ENCODE measurements at regions of chr6 and their contacts with region 1.

Region 1: GRCh38 chr6:136798031-136798430 is 5.8 kb upstream of the MAP3K5 start:
- DNase-seq: no peak
- ATAC-seq: no peak
- H3K4me3 ChIP-seq: no peak overlapping the region
- H3K4me3 Mint-ChIP-seq: no peak overlapping the region
- H3K27ac ChIP-seq: no peak overlapping the region
- H3K27ac Mint-ChIP-seq: no peak overlapping the region
- H3K4me1 ChIP-seq: peaks cover 6 to 8% of the 10 kb centered on the region in 2 experiments
- H3K4me1 Mint-ChIP-seq: peaks cover 5 to 6% (median 6%) of the 10 kb centered on the region in 3 donors
- H3K27me3 ChIP-seq: no peaks in the 10 kb centered on the region
- H3K27me3 Mint-ChIP-seq: peaks cover 0 to 5% of the 10 kb centered on the region in 2 donors

Region 2: DNA sequence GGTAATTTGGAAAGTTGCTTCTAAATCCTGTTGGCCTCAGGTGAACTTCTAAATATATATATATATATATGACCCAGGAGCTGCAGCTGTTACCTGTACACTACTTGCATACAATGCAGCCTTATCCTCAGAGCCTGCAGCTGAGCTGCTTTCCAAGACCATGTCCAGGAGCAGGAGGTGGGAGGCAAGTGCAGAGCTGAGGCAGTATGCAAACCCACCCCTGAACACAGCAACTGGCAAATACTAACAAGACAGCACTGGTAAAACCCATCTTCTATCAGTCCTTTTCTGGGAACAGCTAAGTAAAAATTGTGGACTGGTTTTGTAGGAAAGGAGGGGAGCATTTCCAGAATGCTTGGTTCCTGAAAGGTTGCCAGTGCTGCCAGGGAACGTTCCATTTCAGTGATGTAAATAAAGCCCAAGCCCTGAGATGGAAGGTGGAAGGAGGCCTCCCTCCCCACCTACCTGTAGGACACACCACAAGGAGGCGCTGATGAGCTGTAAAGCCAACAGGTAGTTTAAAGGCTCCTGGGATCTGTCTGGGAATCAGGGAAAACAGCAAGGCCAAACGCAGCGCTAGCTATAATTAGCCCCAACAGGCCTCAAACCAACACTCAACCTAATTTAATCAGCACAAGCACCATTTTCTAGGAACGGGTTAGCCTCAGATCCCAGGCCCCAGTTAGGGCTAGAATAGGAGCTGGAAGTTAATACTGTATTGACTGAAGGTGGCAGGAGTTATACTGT is 154.0 kb before region 1 on chr6:
- CTCF ChIA-PET with region 1: interaction called, 109 to 320 read pairs
- POLR2A ChIA-PET with region 1: interaction called, 5 to 13 read pairs
- DNase-seq: peak; percentile 43 to 88 (median 73)
- ATAC-seq: peak; percentile 66 to 77 (median 71)
- H3K4me3 ChIP-seq: no peak overlapping the region
- H3K4me3 Mint-ChIP-seq: no peak overlapping the region
- H3K27ac ChIP-seq: no peak overlapping the region
- H3K27ac Mint-ChIP-seq: peak overlapping the region in 1 of 2 donors; percentile 12
- H3K4me1 ChIP-seq: peaks cover 0 to 16% of the 10 kb centered on the region in 2 experiments
- H3K4me1 Mint-ChIP-seq: peaks cover 0 to 5% (median 2%) of the 10 kb centered on the region in 3 donors
- H3K27me3 ChIP-seq: no peaks in the 10 kb centered on the region
- H3K27me3 Mint-ChIP-seq: no peaks in the 10 kb centered on the region

Measured in T-cell (primary cell).